ENCODE measurements at regions of chr5 and their contacts with region 1.

Region 1: GRCh38 chr5:134101686-134102439 is 12.6 kb upstream of the TCF7 start:
- DNase-seq: peak; percentile 21
- ATAC-seq: peak; percentile 98
- H3K4me3 ChIP-seq: no peak overlapping the region
- H3K27ac ChIP-seq: no peak overlapping the region
- H3K4me1 ChIP-seq: peaks cover 0 to 13% of the 10 kb centered on the region in 2 experiments; a peak in 1 of 4 replicates
- H3K27me3 ChIP-seq: no peaks in the 10 kb centered on the region
- CTCF ChIP-seq: peak; percentile 79 to 97 (median 88)
- POLR2A ChIP-seq: no peak
- RAD21 ChIP-seq: peak; percentile 74

Region 2: GRCh38 chr5:134026521-134027268 is 75.2 kb before region 1 on chr5:
- CTCF ChIA-PET with region 1: no interaction called
- POLR2A ChIA-PET with region 1: no interaction called
- RAD21 ChIA-PET with region 1: no interaction called
- intact Hi-C with region 1: no loop called
- DNase-seq: peak; percentile 56
- ATAC-seq: peak; percentile 99
- H3K4me3 ChIP-seq: no peak overlapping the region
- H3K27ac ChIP-seq: no peak overlapping the region
- H3K4me1 ChIP-seq: peaks cover 0 to 8% of the 10 kb centered on the region in 2 experiments; a peak in 2 of 4 replicates
- H3K27me3 ChIP-seq: no peaks in the 10 kb centered on the region
- CTCF ChIP-seq: peak; percentile 52 to 76 (median 68); a peak in 5 of 6 replicates
- POLR2A ChIP-seq: no peak
- RAD21 ChIP-seq: peak; percentile 58

Region 3: DNA sequence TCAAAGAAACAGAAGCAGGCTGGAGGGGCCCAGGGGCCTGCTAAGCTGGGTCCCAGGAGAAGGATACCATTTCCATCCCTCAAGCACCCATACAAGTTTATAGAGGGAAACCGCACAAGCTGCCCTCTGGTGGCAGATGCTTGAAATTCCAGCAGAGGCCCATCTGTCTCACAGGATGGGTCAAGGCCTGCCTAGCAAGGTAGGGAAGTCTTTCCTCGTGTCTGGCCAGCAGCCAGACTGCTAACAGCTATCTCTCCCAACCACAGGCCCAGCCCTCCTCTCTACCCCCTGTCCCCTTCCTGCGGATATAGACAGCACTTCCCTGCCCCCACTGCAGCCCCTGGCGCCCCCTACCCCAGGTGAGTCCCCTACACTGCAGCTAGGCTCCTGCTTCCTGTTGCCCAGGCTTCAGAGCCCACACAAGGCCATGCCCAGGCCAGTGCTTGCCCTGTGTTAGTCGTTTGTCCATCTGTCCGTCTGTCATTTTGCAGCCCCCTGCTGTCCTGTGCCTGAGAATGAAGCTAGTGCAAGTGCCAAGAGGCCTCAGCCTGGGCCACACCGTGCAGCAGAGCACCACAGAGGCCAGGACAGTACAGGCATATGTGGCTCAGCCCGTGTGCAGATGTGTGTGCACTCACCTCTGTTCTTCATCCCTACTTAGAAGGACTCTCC is 38.8 kb after region 1 on chr5:
- CTCF ChIA-PET with region 1: interaction called, 14 read pairs
- POLR2A ChIA-PET with region 1: no interaction called
- RAD21 ChIA-PET with region 1: no interaction called
- intact Hi-C with region 1: no loop called
- DNase-seq: peak; percentile 45
- ATAC-seq: peak; percentile 89
- H3K4me3 ChIP-seq: no peak overlapping the region
- H3K27ac ChIP-seq: peak overlapping the region; percentile 34; the same call in 1 of the 2 replicates
- H3K4me1 ChIP-seq: peaks cover 0 to 19% of the 10 kb centered on the region in 2 experiments; a peak in 1 of 4 replicates
- H3K27me3 ChIP-seq: no peaks in the 10 kb centered on the region
- CTCF ChIP-seq: peak; percentile 84 to 94 (median 84)
- POLR2A ChIP-seq: no peak
- RAD21 ChIP-seq: peak; percentile 73

Region 4: GRCh38 chr5:134145779-134146581 is 44.1 kb after region 1 on chr5:
- CTCF ChIA-PET with region 1: interaction called, 14 read pairs
- POLR2A ChIA-PET with region 1: no interaction called
- RAD21 ChIA-PET with region 1: no interaction called
- intact Hi-C with region 1: loop called (anchors 2 kb)
- DNase-seq: peak; percentile 57
- ATAC-seq: peak; percentile 93
- H3K4me3 ChIP-seq: no peak overlapping the region
- H3K27ac ChIP-seq: no peak overlapping the region
- H3K4me1 ChIP-seq: peaks cover 0 to 5% of the 10 kb centered on the region in 2 experiments; a peak in 1 of 4 replicates
- H3K27me3 ChIP-seq: no peaks in the 10 kb centered on the region
- CTCF ChIP-seq: peak; percentile 91 to 94 (median 93)
- POLR2A ChIP-seq: no peak
- RAD21 ChIP-seq: peak; percentile 73

Region 5: GRCh38 chr5:134289509-134290113 is 187.7 kb after region 1 on chr5:
- CTCF ChIA-PET with region 1: interaction called, 3 read pairs
- POLR2A ChIA-PET with region 1: no interaction called
- RAD21 ChIA-PET with region 1: no interaction called
- intact Hi-C with region 1: loop called (anchors 5 kb)
- DNase-seq: peak; percentile 83
- ATAC-seq: peak; percentile 99
- H3K4me3 ChIP-seq: no peak overlapping the region
- H3K27ac ChIP-seq: no peak overlapping the region
- H3K4me1 ChIP-seq: no peaks in the 10 kb centered on the region
- H3K27me3 ChIP-seq: no peaks in the 10 kb centered on the region
- CTCF ChIP-seq: peak; percentile 53 to 97 (median 78)
- POLR2A ChIP-seq: no peak
- RAD21 ChIP-seq: peak; percentile 99

Region 6: DNA sequence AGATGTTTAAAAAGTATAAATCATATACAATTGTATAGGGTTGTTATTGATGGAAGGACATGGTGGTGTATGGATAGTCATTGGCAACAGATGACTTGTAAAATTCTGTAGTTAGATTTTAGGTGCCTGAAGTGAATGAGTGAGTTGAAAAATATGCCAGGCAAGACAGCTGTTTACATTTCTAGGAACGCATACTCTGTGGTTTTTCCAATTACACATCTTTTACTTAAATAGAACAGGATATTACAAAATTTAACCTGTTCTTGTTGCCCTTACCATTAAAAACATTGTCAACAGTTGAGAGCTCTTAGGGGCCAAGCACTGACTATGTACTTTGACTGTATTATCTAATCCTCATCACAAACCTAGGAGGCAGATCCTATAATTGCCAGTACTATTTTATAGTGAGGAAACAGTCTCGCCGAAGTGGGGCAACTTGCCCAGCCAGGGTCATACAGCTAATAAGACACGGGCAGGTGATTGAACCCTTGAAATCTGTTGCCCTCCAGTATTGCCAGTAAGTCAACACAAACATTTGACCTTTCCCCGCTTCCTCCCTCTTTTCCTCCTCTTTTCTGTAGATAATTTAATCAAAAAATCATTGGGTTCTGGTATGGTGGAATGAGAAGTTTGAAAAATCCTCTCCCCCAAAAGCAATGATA is 1208.6 kb after region 1 on chr5:
- CTCF ChIA-PET with region 1: no interaction called
- POLR2A ChIA-PET with region 1: no interaction called
- RAD21 ChIA-PET with region 1: no interaction called
- intact Hi-C with region 1: no loop called
- DNase-seq: no peak
- ATAC-seq: no peak
- H3K4me3 ChIP-seq: no peak overlapping the region
- H3K27ac ChIP-seq: no peak overlapping the region
- H3K4me1 ChIP-seq: peaks cover 0 to 9% of the 10 kb centered on the region in 2 experiments; a peak in 1 of 4 replicates
- H3K27me3 ChIP-seq: no peaks in the 10 kb centered on the region
- CTCF ChIP-seq: no peak
- POLR2A ChIP-seq: no peak
- RAD21 ChIP-seq: no peak

Measured in HCT116 (cell line).